Heart right ventricle (tissue), 16 donors: ENCODE measurements at regions of chr5 and their contacts with region 1.

Region 1: DNA sequence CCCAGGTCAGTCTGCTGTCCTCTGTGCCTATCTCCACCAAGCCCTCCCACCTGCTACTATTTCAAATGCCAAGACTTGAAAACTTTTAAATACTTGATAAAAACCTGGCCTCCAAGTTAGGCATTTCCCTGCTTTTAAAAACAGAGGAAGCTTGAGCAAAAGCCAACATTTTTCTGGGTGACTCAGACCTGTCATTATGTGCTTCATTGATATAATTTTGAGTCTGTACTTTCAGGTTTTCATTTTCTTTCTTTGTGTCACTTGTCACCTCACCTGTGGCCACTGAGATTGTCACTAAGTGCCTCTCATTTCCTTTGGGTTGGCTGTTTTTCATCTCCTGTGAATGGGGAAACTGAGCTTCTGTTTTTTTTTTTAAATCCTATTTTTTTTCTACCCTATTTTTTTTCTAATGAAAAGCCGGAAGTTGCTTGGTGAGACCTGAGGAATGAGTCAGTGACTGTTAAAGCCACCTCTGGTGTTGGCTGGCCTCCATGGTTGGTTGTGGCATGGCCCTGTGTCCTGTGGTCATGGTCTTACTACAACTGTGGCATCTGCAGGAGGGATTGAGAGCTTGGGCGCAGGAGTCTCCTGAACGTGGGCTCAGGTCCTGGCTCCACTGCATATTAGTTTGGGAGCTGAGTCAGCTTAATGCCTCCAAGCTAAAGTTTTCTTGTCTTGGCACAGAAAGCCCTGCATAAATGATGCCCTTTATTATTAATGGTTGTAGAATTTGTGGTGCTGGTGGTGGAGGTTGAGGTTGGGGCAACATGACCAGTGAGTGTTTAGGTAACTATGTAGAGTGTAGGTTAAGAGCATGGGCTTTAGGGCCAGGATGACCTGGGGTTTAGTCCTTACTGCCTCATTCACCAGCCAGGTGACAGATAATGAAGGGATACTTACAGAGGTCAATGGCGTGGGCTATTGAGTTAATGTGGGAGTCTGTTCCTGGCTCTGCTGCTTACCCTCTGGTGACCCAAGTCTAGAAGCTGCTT is 56.9 kb downstream of the ARHGAP26 start:
- DNase-seq: no peak
- ATAC-seq: peak in 4 of 8 donors; percentile 7 to 29 (median 16)
- H3K4me3 ChIP-seq: no peak overlapping the region
- H3K27ac ChIP-seq: peak overlapping the region in 7 of 10 donors; percentile 18 to 76 (median 68)
- H3K4me1 ChIP-seq: peaks cover 24 to 97% (median 82%) of the 10 kb centered on the region in 9 donors
- H3K27me3 ChIP-seq: no peaks in the 10 kb centered on the region
- CTCF ChIP-seq: no peak

Region 2: DNA sequence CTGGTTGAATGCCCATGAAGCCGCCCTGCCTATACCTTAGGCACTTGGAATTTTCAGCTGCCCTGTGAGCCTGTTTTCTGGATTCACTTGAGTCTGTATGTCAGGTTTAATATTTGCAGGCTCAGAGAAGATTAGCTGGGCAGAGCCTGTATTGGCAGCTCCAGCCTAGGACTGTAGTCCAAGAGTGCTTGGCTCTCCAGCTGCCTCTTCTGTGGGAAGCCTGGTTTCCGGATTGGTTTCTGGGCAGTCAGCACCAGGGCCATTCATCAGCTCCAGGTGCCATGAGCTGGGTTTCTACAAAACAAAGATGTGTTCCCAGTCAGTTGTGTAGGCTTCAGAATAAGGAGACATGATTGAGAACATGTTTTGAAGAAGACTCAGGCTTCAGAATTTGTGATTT is 33.2 kb after region 1 on chr5:
- intact Hi-C with region 1: loop called in 2 of 10 experiments (anchors 5 kb)
- DNase-seq: no peak
- ATAC-seq: peak in 6 of 8 donors; percentile 42 to 75 (median 48)
- H3K4me3 ChIP-seq: no peak overlapping the region
- H3K27ac ChIP-seq: peak overlapping the region in 7 of 10 donors; percentile 10 to 73 (median 48)
- H3K4me1 ChIP-seq: peaks cover 17 to 91% (median 76%) of the 10 kb centered on the region in 9 donors
- H3K27me3 ChIP-seq: no peaks in the 10 kb centered on the region
- CTCF ChIP-seq: no peak

Region 3: DNA sequence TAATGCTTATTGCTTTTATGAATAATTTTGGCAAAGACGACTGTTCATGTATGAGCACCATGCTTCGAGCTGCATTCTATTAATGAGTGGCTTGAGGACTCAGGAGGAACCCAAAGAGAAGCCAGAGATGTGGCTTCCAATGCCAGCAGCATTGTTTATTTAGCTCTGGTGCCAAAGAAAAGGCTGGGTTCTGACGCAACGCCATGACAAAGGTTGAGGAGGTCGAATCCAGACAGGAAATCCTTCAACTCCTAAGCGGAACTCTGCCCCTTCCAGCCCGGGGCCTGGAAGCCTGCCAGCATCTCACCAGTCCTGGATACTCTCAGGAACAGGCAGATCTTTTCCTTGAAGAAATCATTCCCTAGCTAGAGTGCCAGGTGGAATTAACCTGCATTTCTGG is 47.5 kb after region 1 on chr5:
- intact Hi-C with region 1: loop called in 2 of 10 experiments (anchors 5 kb)
- DNase-seq: peak; percentile 85 to 88
- ATAC-seq: peak; percentile 27 to 79 (median 69)
- H3K4me3 ChIP-seq: no peak overlapping the region
- H3K27ac ChIP-seq: peak overlapping the region in 8 of 10 donors; percentile 19 to 73 (median 50)
- H3K4me1 ChIP-seq: peaks cover 21 to 78% (median 64%) of the 10 kb centered on the region in 9 donors
- H3K27me3 ChIP-seq: no peaks in the 10 kb centered on the region
- CTCF ChIP-seq: no peak

Region 4: GRCh38 chr5:142929587-142929986 is 102.5 kb after region 1 on chr5:
- intact Hi-C with region 1: no loop called
- DNase-seq: peak in 1 of 2 donors; percentile 70
- ATAC-seq: peak; percentile 75 to 90 (median 86)
- H3K4me3 ChIP-seq: no peak overlapping the region
- H3K27ac ChIP-seq: peak overlapping the region in 9 of 10 donors; percentile 49 to 89 (median 72)
- H3K4me1 ChIP-seq: peaks cover 25 to 99% (median 77%) of the 10 kb centered on the region in 9 donors
- H3K27me3 ChIP-seq: no peaks in the 10 kb centered on the region
- CTCF ChIP-seq: no peak